Cardiac septum (tissue), 1 donor: ENCODE measurements at regions of chr19 and their contacts with region 1.

Region 1: DNA sequence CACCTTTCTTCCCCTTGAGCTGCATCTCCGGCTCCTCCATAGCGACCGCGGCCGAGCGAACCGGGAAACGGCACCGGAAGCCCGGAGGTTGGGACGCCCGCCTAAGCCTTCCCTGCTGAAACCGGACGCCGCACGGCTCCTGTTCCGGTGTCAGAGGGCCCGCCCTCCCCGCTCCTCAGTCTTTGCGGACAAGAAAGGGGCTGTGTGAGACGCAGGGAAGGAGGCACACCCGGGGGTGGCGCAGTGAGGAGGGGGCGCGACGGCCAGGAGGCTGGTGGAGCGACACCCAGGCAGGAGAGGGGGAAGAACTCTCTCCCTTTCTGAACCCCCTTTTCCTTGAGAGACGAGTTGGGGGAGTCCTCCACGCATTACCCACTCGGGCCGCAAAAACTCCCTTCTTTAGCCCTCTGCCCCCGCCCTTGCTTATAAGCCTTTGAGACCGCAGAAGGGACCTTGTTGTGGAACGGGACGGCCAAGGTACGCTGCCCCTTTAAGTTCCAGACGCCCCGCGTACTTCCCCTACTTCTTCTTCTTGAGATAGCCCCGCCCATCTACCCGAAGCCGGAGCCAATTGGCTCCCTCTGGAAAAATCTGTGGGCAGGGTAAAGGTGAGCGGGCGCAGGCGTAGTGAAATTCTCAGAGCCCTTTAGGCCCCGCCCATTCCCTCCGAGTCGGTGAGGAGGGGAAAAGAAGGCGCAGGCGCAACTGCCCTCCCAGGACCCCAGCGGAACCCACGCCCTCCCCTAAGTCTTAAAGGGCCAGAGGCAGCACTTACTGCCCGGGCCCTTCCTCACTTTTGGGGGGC is at the starts of genes BORCS8 and RFXANK:
- DNase-seq: peak; percentile 99
- total RNA-seq, gene BORCS8: 27.1 TPM
- total RNA-seq, gene RFXANK: 29.6 TPM

Region 2: DNA sequence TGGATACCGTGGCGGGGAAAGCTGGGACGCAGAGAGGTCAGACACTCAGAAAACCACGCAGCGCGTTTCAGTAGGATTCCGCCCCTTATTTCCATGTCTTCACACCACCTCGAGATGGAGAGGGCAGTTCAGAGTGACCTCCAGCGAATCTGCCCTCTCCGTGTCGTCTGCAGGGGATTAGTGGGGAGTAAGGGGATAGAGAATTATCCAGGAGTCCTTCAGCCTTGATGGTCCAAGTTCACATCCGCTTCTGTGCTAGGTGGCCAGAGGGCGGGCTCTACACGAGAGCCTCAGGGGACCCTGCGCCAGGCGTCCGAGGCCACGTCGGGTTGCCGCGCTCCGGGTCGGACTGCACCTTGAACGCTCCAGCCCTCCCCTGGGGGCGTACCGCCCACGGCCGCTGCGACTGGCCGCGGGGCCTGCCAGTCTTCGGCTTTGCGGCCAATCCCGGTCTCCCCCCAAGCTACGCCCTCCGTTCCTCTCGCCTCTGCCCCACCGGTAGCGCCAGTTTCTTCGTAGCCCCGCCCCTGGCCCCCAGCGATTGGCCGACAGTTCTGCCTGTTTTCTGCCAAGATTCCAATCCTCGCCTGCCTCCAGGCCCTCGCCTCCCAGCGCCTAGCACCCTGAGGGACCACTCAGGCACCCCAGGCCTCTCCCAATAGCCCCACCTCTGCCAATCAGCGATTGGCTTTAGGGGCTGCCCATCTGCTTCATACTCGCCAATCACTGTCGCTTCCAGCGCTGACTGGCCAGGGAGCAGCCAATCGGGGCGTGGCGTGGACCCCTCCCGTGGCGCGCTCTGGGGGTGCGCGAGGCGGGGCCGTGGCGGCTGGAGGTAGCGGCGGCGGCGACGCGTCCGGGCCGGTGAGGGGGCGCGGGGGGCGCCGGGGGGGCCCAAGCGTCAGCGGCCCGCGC is 128.8 kb before region 1 on chr19 and contains the start of gene SLC25A42:
- intact Hi-C with region 1: loop called (anchors 5 kb)
- DNase-seq: peak; percentile 100
- total RNA-seq, gene SLC25A42: 14.9 TPM

Region 3: DNA sequence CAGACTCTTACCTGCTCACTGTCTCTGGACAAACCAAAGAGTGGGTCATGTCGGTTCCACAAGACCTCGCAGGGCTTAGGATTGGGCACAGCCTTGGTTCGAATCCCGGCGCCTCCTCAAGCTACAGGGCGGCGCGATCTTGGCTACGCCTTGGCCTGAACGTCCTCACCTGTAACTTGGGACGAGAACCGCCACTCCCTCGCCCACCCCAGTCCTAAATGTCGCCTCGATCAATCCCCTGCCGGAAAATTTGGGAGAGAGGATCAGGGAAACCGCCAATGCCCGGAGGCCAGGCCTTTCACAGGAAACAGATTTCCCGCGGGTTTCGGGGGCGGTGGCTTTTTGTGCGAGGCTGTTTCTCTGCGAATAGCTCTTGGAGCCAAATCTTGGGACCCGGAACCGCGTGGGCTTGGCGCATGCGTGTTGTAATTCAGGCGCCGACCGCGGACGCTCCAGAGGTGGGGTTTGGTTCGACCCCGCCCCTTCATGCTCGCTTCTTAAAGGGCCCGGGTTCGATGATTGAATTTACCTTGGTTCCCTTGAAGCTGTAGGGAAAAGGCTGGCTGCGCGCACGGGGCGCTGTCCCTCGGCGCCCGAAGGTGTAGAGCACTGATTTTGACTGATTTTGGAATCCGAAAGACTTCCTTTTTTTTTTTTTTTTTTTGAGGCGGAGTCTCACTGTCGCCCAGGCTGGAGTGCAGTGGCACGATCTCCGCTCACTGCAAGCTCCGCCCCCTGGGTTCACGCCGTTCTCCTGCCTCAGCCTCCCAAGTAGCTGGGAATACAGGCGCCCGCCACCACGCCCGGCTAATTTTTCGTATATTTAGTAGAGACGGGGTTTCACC is 11.0 kb after region 1 on chr19 and contains the start of gene NR2C2AP:
- intact Hi-C with region 1: loop called (anchors 1 kb)
- DNase-seq: peak; percentile 96
- total RNA-seq, gene NR2C2AP: 6.1 TPM

Region 4: GRCh38 chr19:19320362-19321142 is 128.3 kb after region 1 on chr19 and contains the starts of genes MAU2 and SUGP1:
- intact Hi-C with region 1: loop called (anchors 2 kb)
- DNase-seq: peak; percentile 96
- total RNA-seq, gene MAU2: 46.8 TPM
- total RNA-seq, gene SUGP1: 41.6 TPM

Region 5: GRCh38 chr19:19404879-19405860 is 212.9 kb after region 1 on chr19 and contains the start of gene GATAD2A:
- intact Hi-C with region 1: loop called (anchors 5 kb)
- DNase-seq: peak; percentile 98
- total RNA-seq, gene GATAD2A: 39.9 TPM

Region 6: DNA sequence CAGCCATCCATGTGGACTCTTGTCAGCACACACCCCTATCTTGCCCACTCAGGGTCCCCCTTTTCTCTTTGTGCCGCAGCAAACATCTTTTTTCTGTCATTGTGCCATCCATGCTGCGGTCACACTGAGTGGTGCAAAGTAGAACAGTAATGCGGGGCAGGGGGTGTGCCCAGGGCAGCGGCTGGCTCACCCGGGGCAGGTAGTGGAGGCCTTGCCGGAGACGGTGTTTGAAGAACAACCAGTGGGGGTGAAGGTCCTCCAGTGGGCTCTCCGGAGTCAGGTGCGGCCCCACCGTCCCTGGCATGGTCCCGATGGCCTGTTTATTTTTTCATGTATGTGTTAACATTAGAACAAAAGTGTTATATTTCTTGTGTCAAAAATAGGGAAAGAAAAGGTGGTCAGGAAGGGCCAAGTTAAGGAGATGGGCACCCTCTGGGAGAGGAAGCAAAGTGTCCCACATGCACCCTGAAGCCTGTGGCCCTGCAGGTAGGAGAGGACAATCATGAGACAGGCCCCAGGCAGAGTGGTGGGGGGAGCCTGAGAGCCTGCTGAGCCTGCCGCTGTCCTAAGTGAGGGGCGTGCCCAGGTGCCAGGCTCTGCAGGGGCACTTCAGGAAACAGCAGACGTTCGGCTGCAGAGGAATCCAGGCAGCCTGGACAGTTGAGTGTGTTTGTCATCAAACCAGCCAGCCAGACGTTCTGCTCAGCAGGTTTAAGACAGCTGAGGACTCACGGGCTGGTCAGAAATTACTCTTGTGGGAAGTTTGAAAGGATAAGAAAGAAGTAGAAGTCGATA is 310.7 kb after region 1 on chr19:
- intact Hi-C with region 1: loop called (anchors 10 kb)
- DNase-seq: no peak